ENCODE measurements at regions of chr7 and their contacts with region 1.

Region 1: DNA sequence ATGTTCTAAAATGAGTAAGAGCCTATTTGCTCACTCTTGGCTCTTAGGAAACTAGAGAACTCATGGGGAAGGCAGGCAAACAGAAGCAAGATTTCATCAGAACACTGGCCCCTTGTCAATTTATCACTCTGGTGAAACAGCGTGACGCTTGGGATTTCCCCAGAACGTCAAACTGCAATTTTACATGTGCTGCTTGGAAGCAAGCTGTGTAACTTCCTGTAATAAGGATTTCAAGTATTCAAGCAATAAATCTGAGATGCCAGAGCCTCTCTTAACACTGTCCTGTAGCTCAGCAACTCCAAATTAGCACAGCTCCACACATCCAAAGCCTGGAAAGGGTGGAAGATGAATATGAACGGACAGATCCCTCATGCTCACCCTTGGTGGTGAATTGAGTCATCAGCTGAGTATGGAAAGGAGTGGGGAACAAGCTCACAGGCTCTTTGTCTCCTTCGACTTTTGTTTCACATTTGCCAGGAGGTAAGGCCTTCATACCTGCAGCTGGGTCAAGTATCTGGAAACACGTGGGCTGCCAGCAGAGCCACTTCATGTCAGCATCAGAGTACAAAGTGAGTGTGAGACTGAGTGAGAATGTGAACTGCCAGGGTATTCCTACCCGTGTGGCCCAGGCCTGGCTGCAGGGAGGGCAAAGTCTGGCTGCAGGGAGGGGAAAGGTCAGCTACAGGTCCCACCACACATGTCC is 140.4 kb upstream of the NAMPT start:
- DNase-seq: peak; percentile 76 to 82
- H3K4me3 ChIP-seq: no peak overlapping the region
- H3K27ac ChIP-seq: peak overlapping the region; percentile 40 to 74 (median 73)
- H3K4me1 ChIP-seq: peaks cover 22 to 58% of the 10 kb centered on the region in 2 donors
- H3K27me3 ChIP-seq: no peaks in the 10 kb centered on the region
- CTCF ChIP-seq: no peak
- POLR2A ChIP-seq: no peak

Region 2: GRCh38 chr7:106285051-106285854 is 139.9 kb before region 1 on chr7:
- intact Hi-C with region 1: loop called (anchors 10 kb)
- DNase-seq: peak; percentile 99 to 100
- H3K4me3 ChIP-seq: peak overlapping the region; percentile 53 to 83 (median 73)
- H3K27ac ChIP-seq: peak overlapping the region; percentile 96 to 97 (median 97)
- H3K4me1 ChIP-seq: peaks cover 0 to 4% of the 10 kb centered on the region in 2 donors
- H3K27me3 ChIP-seq: no peaks in the 10 kb centered on the region
- CTCF ChIP-seq: no peak
- POLR2A ChIP-seq: peak in 1 of 2 donors; percentile 78

Measured in thyroid gland (tissue), 4 donors.